ENCODE measurements at regions of chr19 and their contacts with region 1.

Region 1: DNA sequence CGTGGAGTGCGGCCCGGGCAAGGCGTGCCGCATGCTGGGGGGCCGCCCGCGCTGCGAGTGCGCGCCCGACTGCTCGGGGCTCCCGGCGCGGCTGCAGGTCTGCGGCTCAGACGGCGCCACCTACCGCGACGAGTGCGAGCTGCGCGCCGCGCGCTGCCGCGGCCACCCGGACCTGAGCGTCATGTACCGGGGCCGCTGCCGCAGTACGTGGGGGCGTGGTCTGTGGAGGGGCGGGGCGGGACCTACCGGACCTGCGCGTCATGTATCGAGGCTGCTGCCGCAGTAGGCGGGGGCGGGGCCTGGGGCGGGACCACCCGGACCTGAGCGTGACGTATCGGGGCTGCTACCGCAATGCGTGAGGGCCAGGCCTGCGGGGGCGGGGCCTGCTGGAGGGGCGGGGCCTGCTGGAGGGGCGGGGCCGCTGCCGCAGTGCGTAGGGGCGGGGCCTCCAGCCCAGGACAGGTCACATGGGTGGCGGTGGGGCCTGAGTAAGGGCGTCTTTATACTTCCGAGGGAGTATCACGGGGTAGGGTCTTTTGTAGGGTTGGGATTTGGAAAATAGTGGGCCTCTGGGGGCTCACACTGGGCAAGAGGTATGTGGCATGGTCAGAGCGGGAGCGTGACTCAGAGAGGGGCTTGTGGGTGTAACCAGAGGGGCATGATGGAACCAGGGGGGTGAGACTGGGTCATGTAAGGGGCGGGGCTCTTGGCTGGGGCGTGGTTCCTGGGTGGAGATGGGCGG is 4.3 kb downstream of the FSTL3 start:
- DNase-seq: peak; percentile 100
- ATAC-seq: peak; percentile 81
- H3K4me3 Mint-ChIP-seq: peak overlapping the region; percentile 70
- H3K27ac Mint-ChIP-seq: peak overlapping the region; percentile 94
- H3K4me1 Mint-ChIP-seq: peaks cover 3% of the 10 kb centered on the region
- H3K27me3 Mint-ChIP-seq: peaks cover 4% of the 10 kb centered on the region

Region 2: DNA sequence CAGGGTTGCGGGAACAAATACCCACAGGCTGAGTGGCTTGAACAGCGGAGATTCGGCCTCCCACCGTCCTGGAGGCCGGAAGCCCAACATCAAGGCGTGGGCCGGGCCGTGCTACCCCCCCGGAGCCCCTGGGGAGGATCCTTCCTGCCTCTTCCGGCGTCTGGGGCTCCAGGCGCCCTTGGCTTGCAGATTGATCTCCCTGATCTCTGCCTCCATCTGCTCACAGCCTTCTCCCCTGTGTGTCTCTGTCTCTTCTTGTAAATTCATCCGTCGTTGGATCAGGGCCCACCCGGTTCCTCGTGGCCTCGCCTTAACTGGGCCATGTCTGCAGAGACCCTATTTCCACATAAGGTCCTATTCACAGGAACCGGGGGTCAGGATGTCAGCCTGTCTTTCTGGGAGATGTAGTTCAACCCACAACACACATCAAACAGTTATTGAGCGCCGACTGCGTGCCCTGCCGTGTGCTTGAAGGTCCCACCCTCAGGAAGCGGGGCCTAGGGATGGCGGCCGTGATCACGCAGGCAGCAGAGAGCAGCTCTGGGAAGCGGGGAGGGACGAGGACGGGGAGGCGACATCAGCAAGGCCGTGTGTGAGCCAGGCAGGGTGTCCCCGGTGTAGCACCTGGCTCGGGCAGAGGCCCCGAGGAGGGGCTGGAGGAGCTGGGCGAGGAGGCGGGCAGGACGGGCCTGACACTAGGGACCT is 69.5 kb before region 1 on chr19:
- CTCF ChIA-PET with region 1: no interaction called
- POLR2A ChIA-PET with region 1: interaction called, 3 read pairs
- intact Hi-C with region 1: loop called in 1 of 2 experiments (anchors 1 kb)
- DNase-seq: peak; percentile 75
- ATAC-seq: peak; percentile 45
- H3K4me3 Mint-ChIP-seq: peak overlapping the region; percentile 72
- H3K27ac Mint-ChIP-seq: peak overlapping the region; percentile 97
- H3K4me1 Mint-ChIP-seq: peaks cover 25% of the 10 kb centered on the region
- H3K27me3 Mint-ChIP-seq: peaks cover 2% of the 10 kb centered on the region

Region 3: DNA sequence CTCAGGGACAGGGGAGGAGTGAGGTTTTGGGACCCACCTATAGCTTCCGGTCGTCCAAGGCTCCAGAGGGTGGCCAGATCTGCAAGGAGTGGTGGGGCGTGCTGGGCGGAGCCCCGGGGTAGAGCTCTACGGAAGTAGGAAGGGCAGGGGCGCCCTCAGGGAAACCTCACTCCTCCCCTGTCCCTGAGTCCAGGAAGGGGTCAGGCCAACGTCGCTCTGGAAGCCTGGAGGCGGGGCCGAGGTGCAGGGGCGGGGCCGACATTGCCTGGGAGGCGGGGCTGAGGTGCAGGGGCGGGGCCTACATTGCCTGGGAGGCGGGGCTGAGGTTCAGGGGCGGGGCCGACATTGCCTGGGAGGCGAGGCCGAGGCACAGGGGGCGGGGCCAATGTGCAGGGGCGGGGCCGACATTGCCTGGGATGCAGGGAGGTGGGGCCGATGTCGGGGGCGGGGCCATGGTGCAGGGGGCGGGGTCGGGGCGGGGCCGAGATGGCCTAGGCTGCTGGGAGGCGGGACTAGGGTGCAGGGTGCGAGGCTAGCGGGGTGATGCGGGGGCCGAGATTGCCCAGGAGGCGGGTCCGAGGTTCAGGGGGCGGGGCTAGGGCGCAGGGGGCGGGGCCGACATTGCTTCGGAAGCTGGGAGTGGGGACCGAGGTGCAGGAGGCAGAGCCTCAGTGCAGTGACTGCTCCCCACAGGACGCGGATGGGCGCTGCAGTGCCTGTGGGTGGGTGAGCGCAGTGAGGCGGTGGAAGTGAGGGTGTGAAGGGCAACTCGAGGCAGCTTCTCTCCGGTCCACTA is 23.4 kb after region 1 on chr19:
- CTCF ChIA-PET with region 1: interaction called, 3 read pairs
- POLR2A ChIA-PET with region 1: no interaction called
- intact Hi-C with region 1: loop called (anchors 1 to 2 kb)
- DNase-seq: peak; percentile 90
- ATAC-seq: peak; percentile 74
- H3K4me3 Mint-ChIP-seq: no peak overlapping the region
- H3K27ac Mint-ChIP-seq: no peak overlapping the region
- H3K4me1 Mint-ChIP-seq: peaks cover 6% of the 10 kb centered on the region
- H3K27me3 Mint-ChIP-seq: peaks cover 14% of the 10 kb centered on the region

Region 4: GRCh38 chr19:892243-893050 is 212.0 kb after region 1 on chr19:
- CTCF ChIA-PET with region 1: no interaction called
- POLR2A ChIA-PET with region 1: no interaction called
- intact Hi-C with region 1: loop called in 1 of 2 experiments (anchors 1 kb)
- DNase-seq: peak; percentile 33
- ATAC-seq: peak; percentile 37
- H3K4me3 Mint-ChIP-seq: peak overlapping the region; percentile 78
- H3K27ac Mint-ChIP-seq: peak overlapping the region; percentile 77
- H3K4me1 Mint-ChIP-seq: peaks cover 13% of the 10 kb centered on the region
- H3K27me3 Mint-ChIP-seq: no peaks in the 10 kb centered on the region

Region 5: DNA sequence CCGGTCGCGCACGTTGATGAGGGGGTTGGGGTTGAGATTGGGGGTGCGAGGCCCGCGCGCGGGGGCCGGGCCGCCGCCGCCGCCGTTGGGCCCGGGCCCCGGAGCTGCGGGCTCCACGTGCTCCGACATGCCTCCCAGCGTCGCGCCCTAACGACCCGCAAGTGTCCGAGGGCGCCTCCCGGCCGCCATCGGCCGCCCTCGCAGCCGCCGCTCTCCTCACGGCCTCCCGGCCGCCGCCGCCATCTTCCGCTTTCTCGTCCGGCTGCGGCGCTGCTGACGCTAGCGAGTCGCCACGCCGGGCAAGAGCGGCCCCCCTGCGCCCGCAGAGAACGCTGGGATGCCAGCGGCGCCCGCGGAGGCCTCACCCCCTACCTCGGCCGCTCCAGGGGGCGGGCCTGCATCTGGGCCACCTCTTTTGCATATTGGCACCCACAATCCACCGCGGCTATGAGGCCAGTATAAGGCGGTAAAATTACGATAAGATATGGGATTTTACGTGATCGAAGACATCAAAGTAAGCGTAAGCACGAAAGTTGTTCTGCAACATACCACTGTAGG is 340.5 kb after region 1 on chr19 and contains the start of gene TMEM259:
- CTCF ChIA-PET with region 1: no interaction called
- POLR2A ChIA-PET with region 1: no interaction called
- intact Hi-C with region 1: loop called in 1 of 2 experiments (anchors 1 kb)
- DNase-seq: peak; percentile 99
- ATAC-seq: peak; percentile 90
- H3K4me3 Mint-ChIP-seq: peak within 1 kb of the TSS; percentile 94
- H3K27ac Mint-ChIP-seq: peak within 1 kb of the TSS; percentile 96
- H3K4me1 Mint-ChIP-seq: peaks cover 35% of the 10 kb centered on the region
- H3K27me3 Mint-ChIP-seq: no peaks in the 10 kb centered on the region
- total RNA-seq, gene TMEM259: 106 to 128 TPM

Region 6: GRCh38 chr19:1406774-1407499 is 726.5 kb after region 1 on chr19:
- CTCF ChIA-PET with region 1: no interaction called
- POLR2A ChIA-PET with region 1: no interaction called
- intact Hi-C with region 1: loop called in 1 of 2 experiments (anchors 2 kb)
- DNase-seq: peak; percentile 99
- ATAC-seq: peak; percentile 83
- H3K4me3 Mint-ChIP-seq: peak overlapping the region; percentile 65
- H3K27ac Mint-ChIP-seq: peak overlapping the region; percentile 72
- H3K4me1 Mint-ChIP-seq: peaks cover 43% of the 10 kb centered on the region
- H3K27me3 Mint-ChIP-seq: peaks cover 2% of the 10 kb centered on the region

Measured in activated CD4-positive, alpha-beta T cell treated with anti-CD3 and anti-CD28 coated beads for 36 hours (primary cell).